H1 (cell line): ENCODE measurements at regions of chr14 and their contacts with region 1.

Region 1: DNA sequence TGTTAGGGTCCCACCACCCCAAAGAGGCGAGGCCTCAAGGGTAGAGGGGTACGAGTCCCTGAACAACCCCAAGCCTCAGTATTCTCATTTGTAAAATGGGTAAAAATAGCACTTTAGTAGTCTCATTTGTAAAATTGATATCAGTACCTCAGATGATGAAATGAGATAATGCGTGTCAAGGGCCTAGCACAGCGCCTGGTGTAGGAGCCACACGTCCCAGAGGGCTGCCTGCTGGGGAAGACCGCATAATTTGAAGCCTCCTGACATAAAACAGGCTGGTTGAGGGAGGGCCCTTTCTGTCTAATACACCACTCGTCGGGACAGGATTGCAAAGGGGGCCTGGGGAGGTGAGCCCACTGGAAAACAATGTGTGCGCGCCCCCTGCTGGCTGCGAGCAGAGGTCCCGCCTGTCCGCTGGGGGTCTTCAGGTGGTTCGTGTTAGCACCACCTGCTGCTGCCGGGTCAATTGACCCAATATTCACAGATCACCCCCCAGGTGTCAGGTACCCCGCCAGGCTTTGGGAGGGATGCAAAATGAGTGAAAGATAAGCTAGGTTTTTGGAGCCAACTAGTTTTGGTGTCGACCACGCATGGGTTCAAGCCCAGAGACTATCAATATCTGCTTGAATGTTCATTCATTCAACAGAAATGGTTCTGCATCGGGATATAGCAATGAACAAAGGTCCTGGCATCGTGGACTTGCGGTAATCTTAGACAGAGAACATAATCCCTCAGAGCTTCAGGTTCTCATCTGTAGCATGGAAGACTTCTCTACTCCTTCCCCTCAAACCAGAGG is 24.7 kb upstream of the IRF2BPL start:
- DNase-seq: peak; percentile 70 to 93
- H3K4me3 ChIP-seq: no peak overlapping the region
- H3K27ac ChIP-seq: no peak overlapping the region
- H3K4me1 ChIP-seq: peaks cover 0 to 12% (median 7%) of the 10 kb centered on the region in 4 experiments; a peak in 5 of 7 replicates
- H3K27me3 ChIP-seq: no peaks in the 10 kb centered on the region
- CTCF ChIP-seq: peak; percentile 89 to 98 (median 98)
- EP300 ChIP-seq: peak in 1 of 2 experiments; percentile 70; a peak in 1 of 3 replicates
- POLR2A ChIP-seq: no peak
- RAD21 ChIP-seq: peak; percentile 97 to 99

Region 2: GRCh38 chr14:76904740-76905438 is 148.4 kb before region 1 on chr14:
- CTCF ChIA-PET with region 1: interaction called, 237 read pairs
- POLR2A ChIA-PET with region 1: no interaction called
- DNase-seq: no peak
- H3K4me3 ChIP-seq: no peak overlapping the region
- H3K27ac ChIP-seq: no peak overlapping the region
- H3K4me1 ChIP-seq: peaks cover 0 to 3% (median 1%) of the 10 kb centered on the region in 4 experiments; a peak in 1 of 7 replicates
- H3K27me3 ChIP-seq: no peaks in the 10 kb centered on the region
- CTCF ChIP-seq: no peak
- EP300 ChIP-seq: no peak
- POLR2A ChIP-seq: no peak
- RAD21 ChIP-seq: no peak

Region 3: DNA sequence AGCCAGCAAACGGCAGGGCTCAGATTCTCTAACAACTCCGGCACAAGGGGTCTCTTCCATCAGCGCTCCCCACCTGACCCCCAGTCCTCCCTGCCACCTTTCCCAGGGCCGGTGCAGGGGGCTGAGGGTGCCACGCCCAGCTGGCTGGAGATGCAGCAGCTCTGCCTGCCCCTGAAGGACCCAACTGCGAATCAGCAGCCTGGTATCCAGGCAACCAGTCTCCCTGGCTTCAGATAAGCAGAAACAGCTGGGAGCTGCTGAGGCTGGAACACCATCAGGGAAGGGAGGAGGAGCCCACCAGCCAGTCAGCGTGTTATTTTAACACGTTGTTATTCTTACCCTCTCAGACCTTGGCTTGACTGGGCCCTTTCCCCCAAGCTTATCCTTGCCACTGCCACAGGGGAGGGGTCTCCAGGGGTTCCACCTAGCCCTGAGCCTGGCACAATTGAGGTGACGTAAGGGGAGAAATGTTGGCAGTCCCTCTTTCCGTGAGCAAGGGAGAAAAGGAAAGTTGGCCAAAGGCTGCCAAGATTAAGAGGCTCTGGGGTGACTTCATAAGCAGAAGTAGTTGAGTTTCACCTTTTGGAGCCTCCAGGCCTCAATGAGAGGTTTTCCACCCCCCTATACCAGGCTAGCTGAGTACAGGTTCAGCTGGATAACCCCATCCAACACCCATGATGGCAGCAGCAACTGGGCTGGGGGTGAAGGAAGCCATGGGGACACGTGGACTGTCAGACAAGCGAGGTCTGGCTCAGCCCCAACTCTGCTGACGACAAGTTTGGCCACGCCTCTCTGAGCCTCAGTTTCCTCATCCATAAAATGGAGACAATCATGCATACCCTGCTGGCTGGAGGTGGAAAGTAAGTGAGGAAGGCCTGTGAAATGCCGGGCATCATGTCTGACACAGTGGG is 115.8 kb before region 1 on chr14:
- CTCF ChIA-PET with region 1: interaction called, 21 read pairs
- POLR2A ChIA-PET with region 1: no interaction called
- DNase-seq: no peak
- H3K4me3 ChIP-seq: no peak overlapping the region
- H3K27ac ChIP-seq: peak overlapping the region; percentile 10; the same call in 1 of the 2 replicates
- H3K4me1 ChIP-seq: peaks cover 0 to 29% (median 16%) of the 10 kb centered on the region in 4 experiments; a peak in 6 of 7 replicates
- H3K27me3 ChIP-seq: no peaks in the 10 kb centered on the region
- CTCF ChIP-seq: no peak
- EP300 ChIP-seq: no peak
- POLR2A ChIP-seq: no peak
- RAD21 ChIP-seq: no peak

Region 4: GRCh38 chr14:76956316-76957090 is 96.7 kb before region 1 on chr14:
- CTCF ChIA-PET with region 1: interaction called, 14 read pairs
- POLR2A ChIA-PET with region 1: interaction called, 3 read pairs
- DNase-seq: peak; percentile 91 to 94
- H3K4me3 ChIP-seq: peak overlapping the region; percentile 11 to 48 (median 26); a peak in 5 of 8 replicates
- H3K27ac ChIP-seq: peak overlapping the region; percentile 83
- H3K4me1 ChIP-seq: peaks cover 35 to 48% (median 41%) of the 10 kb centered on the region in 4 experiments
- H3K27me3 ChIP-seq: no peaks in the 10 kb centered on the region
- CTCF ChIP-seq: no peak; a peak in 1 of 4 replicates
- EP300 ChIP-seq: peak; percentile 36 to 88
- POLR2A ChIP-seq: peak in 1 of 2 experiments; percentile 25; a peak in 2 of 3 replicates
- RAD21 ChIP-seq: peak in 1 of 2 experiments; percentile 24; a peak in 2 of 4 replicates

Region 5: GRCh38 chr14:77000340-77001270 is 52.6 kb before region 1 on chr14:
- CTCF ChIA-PET with region 1: interaction called, 17 read pairs
- POLR2A ChIA-PET with region 1: no interaction called
- DNase-seq: no peak
- H3K4me3 ChIP-seq: no peak overlapping the region
- H3K27ac ChIP-seq: no peak overlapping the region
- H3K4me1 ChIP-seq: peaks cover 11 to 28% (median 18%) of the 10 kb centered on the region in 4 experiments
- H3K27me3 ChIP-seq: peaks cover 0 to 1% (median 0%) of the 10 kb centered on the region in 4 experiments; a peak in 1 of 7 replicates
- CTCF ChIP-seq: no peak
- EP300 ChIP-seq: no peak
- POLR2A ChIP-seq: no peak
- RAD21 ChIP-seq: no peak

Region 6: DNA sequence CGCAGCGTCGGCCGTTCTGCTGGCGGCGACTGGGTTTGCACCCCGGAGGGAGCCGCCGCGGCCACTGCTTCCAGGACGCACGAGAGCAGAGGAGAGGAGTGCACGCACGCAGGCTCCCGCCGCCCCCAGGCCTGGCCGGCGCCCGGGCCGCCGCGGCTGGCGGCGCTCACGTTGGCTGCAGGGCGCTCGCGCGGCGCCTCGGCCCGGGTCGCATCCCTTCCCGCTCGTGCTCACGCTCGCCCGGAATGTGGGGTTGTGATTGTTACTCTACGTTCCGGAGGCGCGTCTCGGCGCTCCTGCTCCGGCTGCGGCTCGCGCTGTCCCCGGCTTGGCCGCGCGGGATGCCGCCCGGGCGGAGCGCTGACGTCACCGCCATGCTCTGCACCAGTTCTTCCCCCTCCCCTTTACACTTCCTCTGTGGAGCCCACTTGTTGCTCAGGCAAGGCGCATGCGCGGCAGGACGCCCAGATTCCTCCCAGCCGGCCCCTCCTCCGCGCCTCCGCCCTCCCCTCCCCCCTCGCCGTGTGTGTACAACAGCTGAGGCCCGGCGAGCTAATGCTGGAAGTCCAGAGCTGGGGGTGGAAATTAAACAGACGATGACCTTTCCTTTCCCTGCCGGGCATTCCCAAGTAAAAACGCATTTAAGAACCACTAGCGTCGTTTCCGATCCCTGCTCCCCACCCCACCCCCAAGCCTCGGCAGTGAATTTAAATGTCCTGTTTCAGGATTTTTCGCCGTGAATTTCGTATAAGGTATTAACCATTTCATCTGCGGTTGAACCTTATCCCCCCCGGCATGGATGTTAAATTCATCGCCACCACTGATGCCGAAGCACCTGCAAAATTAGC is 24.6 kb before region 1 on chr14 and contains the start of gene IRF2BPL:
- CTCF ChIA-PET with region 1: interaction called, 14 read pairs
- POLR2A ChIA-PET with region 1: interaction called, 4 read pairs
- DNase-seq: peak in 1 of 2 experiments; percentile 88
- H3K4me3 ChIP-seq: peak within 1 kb of the TSS; percentile 61 to 86 (median 70)
- H3K27ac ChIP-seq: peak within 1 kb of the TSS; percentile 91
- H3K4me1 ChIP-seq: peaks cover 6 to 40% (median 27%) of the 10 kb centered on the region in 4 experiments
- H3K27me3 ChIP-seq: peaks cover 0 to 5% (median 3%) of the 10 kb centered on the region in 4 experiments; a peak in 5 of 7 replicates
- CTCF ChIP-seq: no peak
- EP300 ChIP-seq: 0 out of 3 replicates have a peak, but pooled peaks of 1 of the 2 experiments have one; percentile 42
- POLR2A ChIP-seq: peak in 1 of 2 experiments; percentile 85; a peak in 2 of 3 replicates
- RAD21 ChIP-seq: peak; percentile 0 to 1; a peak in 2 of 4 replicates
- total RNA-seq, gene IRF2BPL: 57.0 and 59.6 TPM in 2 replicates

Region 7: DNA sequence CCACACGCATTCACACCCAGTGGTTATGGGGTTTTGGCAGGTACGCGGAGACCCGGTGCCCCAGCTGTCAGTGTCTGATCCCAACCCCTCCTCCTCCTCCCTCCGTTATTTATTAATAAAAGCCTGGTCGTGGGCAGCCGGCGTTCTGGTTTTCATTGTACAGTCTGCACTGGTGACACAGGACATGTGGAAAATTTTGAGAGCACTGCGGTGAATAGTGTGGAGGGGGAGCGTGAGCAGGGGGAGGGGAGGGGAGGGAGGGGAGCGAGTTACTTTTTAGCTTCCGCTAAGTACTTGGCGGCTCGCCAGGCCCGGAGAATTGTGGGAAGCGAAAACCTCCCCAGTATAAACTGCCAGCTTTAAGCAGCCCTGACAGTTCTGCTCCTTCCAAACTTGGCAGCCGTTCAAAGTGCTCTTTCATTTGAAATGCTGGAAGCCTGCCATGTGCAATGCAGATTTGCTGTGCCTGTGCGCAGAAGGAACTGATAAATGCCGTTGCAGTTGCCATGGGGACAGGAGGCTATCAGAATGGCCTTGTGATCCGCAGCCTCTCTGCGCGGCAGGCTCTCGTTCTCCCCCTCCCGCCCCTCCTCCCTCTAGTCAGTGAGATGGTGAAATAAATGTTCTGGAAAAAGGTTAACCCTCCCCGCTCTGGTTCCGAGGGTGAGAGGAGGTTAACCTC is 13.0 kb before region 1 on chr14:
- CTCF ChIA-PET with region 1: interaction called, 76 read pairs
- POLR2A ChIA-PET with region 1: interaction called, 4 read pairs
- DNase-seq: peak in 1 of 2 experiments; percentile 80
- H3K4me3 ChIP-seq: peak overlapping the region; percentile 22 to 58 (median 52); a peak in 7 of 8 replicates
- H3K27ac ChIP-seq: no peak overlapping the region
- H3K4me1 ChIP-seq: peaks cover 33 to 65% (median 41%) of the 10 kb centered on the region in 4 experiments; a peak in 6 of 7 replicates
- H3K27me3 ChIP-seq: peaks cover 0 to 4% (median 2%) of the 10 kb centered on the region in 4 experiments; a peak in 2 of 7 replicates
- CTCF ChIP-seq: no peak
- EP300 ChIP-seq: no peak; a peak in 1 of 3 replicates
- POLR2A ChIP-seq: no peak
- RAD21 ChIP-seq: no peak

Region 8: GRCh38 chr14:77111043-77111442 is 57.8 kb after region 1 on chr14:
- CTCF ChIA-PET with region 1: no interaction called
- POLR2A ChIA-PET with region 1: no interaction called
- DNase-seq: peak in 1 of 2 experiments; percentile 59
- H3K4me3 ChIP-seq: peak overlapping the region in 1 of 4 experiments; percentile 39; a peak in 1 of 8 replicates
- H3K27ac ChIP-seq: peak overlapping the region; percentile 76
- H3K4me1 ChIP-seq: peaks cover 0 to 21% (median 14%) of the 10 kb centered on the region in 4 experiments; a peak in 6 of 7 replicates
- H3K27me3 ChIP-seq: no peaks in the 10 kb centered on the region
- CTCF ChIP-seq: no peak
- EP300 ChIP-seq: peak in 1 of 2 experiments; percentile 33; a peak in 1 of 3 replicates
- POLR2A ChIP-seq: peak in 1 of 2 experiments; percentile 73; a peak in 2 of 3 replicates
- RAD21 ChIP-seq: no peak

Region 9: GRCh38 chr14:77268989-77269600 is 215.9 kb after region 1 on chr14:
- CTCF ChIA-PET with region 1: no interaction called
- POLR2A ChIA-PET with region 1: no interaction called
- DNase-seq: no peak
- H3K4me3 ChIP-seq: no peak overlapping the region
- H3K27ac ChIP-seq: no peak overlapping the region
- H3K4me1 ChIP-seq: peaks cover 0 to 9% (median 5%) of the 10 kb centered on the region in 4 experiments; a peak in 3 of 7 replicates
- H3K27me3 ChIP-seq: peaks cover 15 to 49% (median 41%) of the 10 kb centered on the region in 4 experiments
- CTCF ChIP-seq: no peak
- EP300 ChIP-seq: no peak
- POLR2A ChIP-seq: no peak
- RAD21 ChIP-seq: peak in 1 of 2 experiments; percentile 5; a peak in 1 of 4 replicates